ENCODE measurements at regions of chr1 and their contacts with region 1.

Region 1: DNA sequence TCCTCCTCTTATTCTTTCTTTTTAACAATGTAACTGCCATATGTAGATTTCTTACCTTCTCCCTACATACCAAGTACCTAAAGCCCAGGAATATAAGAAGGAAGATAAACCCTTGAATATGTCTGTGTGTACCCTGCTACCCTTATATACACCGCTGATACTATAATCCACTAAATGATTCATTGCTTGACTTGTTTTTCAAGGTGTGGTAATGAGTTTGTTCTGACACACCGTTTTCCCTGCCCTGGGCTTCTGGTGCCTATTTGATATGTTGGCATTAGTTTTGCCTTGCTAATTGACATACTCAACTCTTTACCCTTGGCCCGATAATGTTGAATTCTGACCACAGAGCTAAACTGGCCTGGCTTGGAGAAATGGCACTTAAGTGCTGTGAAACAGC is 64.3 kb downstream of the IL23R start:
- DNase-seq: no peak
- H3K4me3 ChIP-seq: no peak overlapping the region
- H3K27ac ChIP-seq: no peak overlapping the region
- H3K4me1 ChIP-seq: no peaks in the 10 kb centered on the region
- H3K27me3 ChIP-seq: peaks cover 3% of the 10 kb centered on the region
- CTCF ChIP-seq: no peak
- POLR2A ChIP-seq: no peak

Region 2: DNA sequence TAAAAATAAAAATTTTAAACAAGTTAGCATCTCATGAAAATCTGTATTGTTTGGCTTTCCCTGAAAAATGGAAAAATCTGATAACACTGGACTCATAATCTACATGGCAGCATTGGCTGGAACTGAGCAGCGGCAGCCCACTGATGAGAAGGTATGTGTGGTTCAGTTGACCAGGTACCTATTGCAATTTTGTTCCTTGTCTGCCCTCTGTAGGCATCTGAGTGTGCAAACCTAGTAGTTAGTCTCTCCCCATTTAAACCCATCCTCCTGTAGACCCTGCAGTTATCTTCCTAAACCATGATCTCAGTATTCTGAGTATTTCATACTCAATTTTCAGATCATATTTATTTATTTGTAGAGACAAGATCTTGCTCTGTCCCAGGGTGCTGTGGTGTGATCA is 259.1 kb after region 1 on chr1:
- intact Hi-C with region 1: loop called (anchors 10 kb)
- DNase-seq: peak; percentile 18
- H3K4me3 ChIP-seq: no peak overlapping the region
- H3K27ac ChIP-seq: no peak overlapping the region
- H3K4me1 ChIP-seq: no peaks in the 10 kb centered on the region
- H3K27me3 ChIP-seq: no peaks in the 10 kb centered on the region
- CTCF ChIP-seq: peak in 3 of 4 experiments; percentile 21 to 48 (median 44)
- POLR2A ChIP-seq: no peak